ENCODE measurements at regions of chr1 and their contacts with region 1.

Region 1: DNA sequence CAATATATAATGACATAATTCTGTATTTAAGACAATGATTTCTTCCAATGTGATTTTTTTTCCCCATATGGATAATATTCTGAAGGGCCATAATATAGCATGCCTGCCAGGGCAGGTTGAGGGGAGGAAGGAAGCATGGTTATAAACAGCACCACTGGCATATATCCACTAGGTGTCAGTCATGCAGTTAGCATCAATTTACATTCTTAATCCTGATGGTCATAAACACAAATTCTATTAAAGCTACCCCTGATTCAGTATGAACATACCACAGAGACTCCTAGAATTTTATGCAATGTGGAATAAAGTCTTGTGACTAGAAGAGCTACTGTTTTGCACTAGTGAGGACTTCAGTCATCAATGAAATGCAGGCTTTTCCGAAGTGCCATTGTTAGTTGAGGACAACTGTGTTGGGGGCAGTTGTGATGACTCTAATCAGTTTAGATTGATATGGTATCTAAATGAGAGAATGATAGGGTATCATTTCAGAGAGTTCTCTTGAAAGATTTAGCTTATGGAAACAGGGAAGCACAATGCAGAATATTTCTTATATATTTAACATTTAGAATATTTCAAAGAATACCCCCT is 342.7 kb upstream of the NR5A2 start:
- DNase-seq: no peak
- ATAC-seq: peak; percentile 63
- H3K4me3 Mint-ChIP-seq: no peak overlapping the region
- H3K27ac Mint-ChIP-seq: no peak overlapping the region
- H3K4me1 Mint-ChIP-seq: no peaks in the 10 kb centered on the region
- H3K27me3 Mint-ChIP-seq: peaks cover 30% of the 10 kb centered on the region

Region 2: DNA sequence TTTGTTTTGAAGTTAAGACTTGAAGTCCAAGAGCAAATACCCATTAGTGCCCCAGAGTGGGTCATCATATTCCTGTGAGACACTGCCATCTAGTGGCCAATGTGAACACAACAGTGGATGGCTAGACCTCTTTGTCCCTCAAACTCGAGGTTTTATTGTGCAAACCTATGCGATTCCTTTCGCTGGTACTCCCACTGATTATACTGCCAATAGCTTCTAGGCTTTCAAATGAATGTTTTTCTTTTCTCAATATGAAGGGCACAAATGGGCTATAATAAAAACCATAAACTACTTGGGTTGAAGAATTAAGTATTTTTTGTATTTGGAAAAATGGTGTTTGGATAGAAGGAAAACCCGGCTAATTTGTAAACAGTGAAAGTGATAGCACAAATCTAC is 825.4 kb after region 1 on chr1:
- CTCF ChIA-PET with region 1: interaction called, 10 read pairs
- DNase-seq: peak; percentile 77
- ATAC-seq: peak; percentile 81
- H3K4me3 Mint-ChIP-seq: no peak overlapping the region
- H3K27ac Mint-ChIP-seq: no peak overlapping the region
- H3K4me1 Mint-ChIP-seq: no peaks in the 10 kb centered on the region
- H3K27me3 Mint-ChIP-seq: peaks cover 56% of the 10 kb centered on the region

Measured in activated CD8-positive, alpha-beta memory T cell treated with anti-CD3 and anti-CD28 coated beads, Interleukin-2, amount 10 ng/mL, durations not matched to agents 7 days and 5 days (primary cell).